ENCODE measurements at regions of chr3 and their contacts with region 1.

Region 1: DNA sequence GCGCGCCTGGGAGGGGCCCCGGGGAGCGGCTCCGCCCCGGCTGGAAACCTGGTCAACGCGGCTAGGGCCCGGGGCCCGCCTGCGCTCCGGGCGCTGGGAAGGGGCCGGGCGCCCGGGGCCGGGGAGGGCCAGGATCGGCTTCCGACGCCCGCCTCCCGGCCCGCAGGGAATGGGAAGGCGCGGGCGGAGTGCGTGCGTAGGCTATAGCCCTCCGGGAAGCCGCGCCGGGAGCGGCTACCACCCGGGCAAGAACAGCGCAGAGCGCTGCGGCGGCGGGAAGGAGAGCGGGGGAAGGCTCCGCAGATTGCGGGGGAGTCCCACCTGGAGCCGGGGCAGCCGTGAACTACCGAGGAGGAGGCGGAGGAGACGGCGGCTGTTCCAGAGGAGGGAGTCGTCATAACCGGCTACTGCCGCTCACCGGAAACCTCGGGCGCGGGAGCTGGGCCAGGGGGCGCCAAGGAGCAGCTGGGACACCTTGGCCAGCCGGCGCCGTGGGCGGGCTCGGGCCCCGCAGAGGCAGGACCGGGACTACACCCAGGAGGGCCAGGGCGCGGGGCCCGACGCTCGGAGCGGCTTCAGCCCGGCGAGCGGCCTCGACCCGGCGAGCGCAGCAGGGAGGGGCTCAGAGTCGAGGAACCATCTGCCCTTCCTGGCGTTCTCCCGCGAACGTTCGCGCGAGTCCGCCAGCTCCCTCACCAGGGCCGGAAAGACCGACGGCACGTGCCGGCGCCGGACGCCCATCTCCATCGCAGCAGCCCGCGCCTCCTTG is at the start of gene EOGT:
- DNase-seq: peak; percentile 39
- H3K4me3 ChIP-seq: peak within 1 kb of the TSS; percentile 76
- H3K27me3 ChIP-seq: no peaks in the 10 kb centered on the region
- CTCF ChIP-seq: peak; percentile 58
- polyA plus RNA-seq, gene EOGT: 18.9 and 31.2 TPM in 2 replicates

Region 2: GRCh38 chr3:69031635-69032034 is 18.2 kb after region 1 on chr3:
- CTCF ChIA-PET with region 1: interaction called, 7 read pairs
- POLR2A ChIA-PET with region 1: interaction called, 12 read pairs
- DNase-seq: no peak
- H3K4me3 ChIP-seq: no peak overlapping the region
- H3K27me3 ChIP-seq: no peaks in the 10 kb centered on the region
- CTCF ChIP-seq: no peak